CD8-positive, alpha-beta T cell (primary cell): ENCODE measurements at regions of chr14 and their contacts with region 1.

Region 1: DNA sequence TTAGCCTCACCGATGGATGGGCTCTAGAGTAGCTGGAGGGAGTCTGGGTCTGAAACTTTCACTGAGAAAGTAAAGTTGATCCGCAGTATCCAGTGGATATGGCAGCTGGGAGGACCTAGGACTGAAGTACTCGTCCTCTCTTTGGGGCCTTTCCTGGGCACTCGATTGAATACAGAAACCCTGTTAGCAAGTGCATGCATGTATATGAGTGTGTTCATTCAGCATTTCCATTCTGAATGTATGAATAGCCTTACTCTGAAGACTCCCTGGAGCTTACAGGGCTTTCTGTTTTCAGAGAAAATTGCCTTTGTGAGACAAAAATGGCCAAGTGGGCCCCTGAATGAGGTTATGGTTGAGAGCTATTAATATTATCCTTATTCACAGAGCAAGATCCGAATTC is 62.8 kb downstream of the DAD1 start:
- DNase-seq: no peak
- ATAC-seq: no peak
- H3K4me3 ChIP-seq: peak overlapping the region; percentile 47 to 61
- H3K4me3 Mint-ChIP-seq: peak overlapping the region; percentile 86
- H3K27ac ChIP-seq: peak overlapping the region; percentile 27 to 86
- H3K27ac Mint-ChIP-seq: peak overlapping the region; percentile 99
- H3K4me1 ChIP-seq: peaks cover 90% of the 10 kb centered on the region
- H3K4me1 Mint-ChIP-seq: peaks cover 89% of the 10 kb centered on the region
- H3K27me3 ChIP-seq: no peaks in the 10 kb centered on the region
- H3K27me3 Mint-ChIP-seq: no peaks in the 10 kb centered on the region
- CTCF ChIP-seq: no peak

Region 2: DNA sequence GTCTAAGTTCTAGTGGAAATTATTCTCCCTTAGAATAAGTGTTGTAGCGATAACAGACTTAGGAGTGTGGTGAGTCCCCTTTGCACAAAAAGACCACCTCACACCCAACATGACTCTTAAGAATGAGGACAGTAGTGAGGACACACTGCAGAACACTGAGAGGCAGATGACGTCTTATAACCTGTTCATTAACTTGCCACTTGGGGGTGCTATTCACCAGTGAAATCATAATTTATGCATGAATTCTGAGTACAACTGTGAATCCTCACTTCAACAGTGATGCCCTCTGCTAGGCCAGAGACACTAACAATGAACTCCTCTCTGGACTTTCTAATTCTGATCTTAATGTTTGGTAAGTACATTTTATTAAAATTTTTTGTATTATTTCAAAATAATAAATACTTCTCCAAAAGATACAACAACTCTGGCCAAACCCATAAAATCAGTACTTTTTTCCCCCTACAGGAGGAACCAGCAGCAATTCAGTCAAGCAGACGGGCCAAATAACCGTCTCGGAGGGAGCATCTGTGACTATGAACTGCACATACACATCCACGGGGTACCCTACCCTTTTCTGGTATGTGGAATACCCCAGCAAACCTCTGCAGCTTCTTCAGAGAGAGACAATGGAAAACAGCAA is 211.9 kb before region 1 on chr14:
- CTCF ChIA-PET with region 1: no interaction called
- POLR2A ChIA-PET with region 1: no interaction called
- intact Hi-C with region 1: no loop called
- DNase-seq: peak in 3 of 9 experiments; percentile 3 to 55 (median 36)
- ATAC-seq: peak; percentile 54
- H3K4me3 ChIP-seq: no peak overlapping the region
- H3K4me3 Mint-ChIP-seq: peak overlapping the region; percentile 42
- H3K27ac ChIP-seq: no peak overlapping the region
- H3K27ac Mint-ChIP-seq: peak overlapping the region; percentile 22
- H3K4me1 ChIP-seq: no peaks in the 10 kb centered on the region
- H3K4me1 Mint-ChIP-seq: no peaks in the 10 kb centered on the region
- H3K27me3 ChIP-seq: no peaks in the 10 kb centered on the region
- H3K27me3 Mint-ChIP-seq: no peaks in the 10 kb centered on the region
- CTCF ChIP-seq: no peak

Region 3: GRCh38 chr14:22513066-22513812 is 13.0 kb before region 1 on chr14:
- CTCF ChIA-PET with region 1: interaction called, 47 read pairs
- POLR2A ChIA-PET with region 1: interaction called, 274 read pairs
- intact Hi-C with region 1: loop called in 1 of 2 experiments (anchors 1 kb)
- DNase-seq: no peak
- ATAC-seq: no peak
- H3K4me3 ChIP-seq: peak overlapping the region; percentile 41 to 53
- H3K4me3 Mint-ChIP-seq: peak overlapping the region; percentile 81
- H3K27ac ChIP-seq: peak overlapping the region; percentile 43 to 82
- H3K27ac Mint-ChIP-seq: peak overlapping the region; percentile 99
- H3K4me1 ChIP-seq: peaks cover 95% of the 10 kb centered on the region
- H3K4me1 Mint-ChIP-seq: peaks cover 89% of the 10 kb centered on the region
- H3K27me3 ChIP-seq: no peaks in the 10 kb centered on the region
- H3K27me3 Mint-ChIP-seq: no peaks in the 10 kb centered on the region
- CTCF ChIP-seq: no peak

Region 4: DNA sequence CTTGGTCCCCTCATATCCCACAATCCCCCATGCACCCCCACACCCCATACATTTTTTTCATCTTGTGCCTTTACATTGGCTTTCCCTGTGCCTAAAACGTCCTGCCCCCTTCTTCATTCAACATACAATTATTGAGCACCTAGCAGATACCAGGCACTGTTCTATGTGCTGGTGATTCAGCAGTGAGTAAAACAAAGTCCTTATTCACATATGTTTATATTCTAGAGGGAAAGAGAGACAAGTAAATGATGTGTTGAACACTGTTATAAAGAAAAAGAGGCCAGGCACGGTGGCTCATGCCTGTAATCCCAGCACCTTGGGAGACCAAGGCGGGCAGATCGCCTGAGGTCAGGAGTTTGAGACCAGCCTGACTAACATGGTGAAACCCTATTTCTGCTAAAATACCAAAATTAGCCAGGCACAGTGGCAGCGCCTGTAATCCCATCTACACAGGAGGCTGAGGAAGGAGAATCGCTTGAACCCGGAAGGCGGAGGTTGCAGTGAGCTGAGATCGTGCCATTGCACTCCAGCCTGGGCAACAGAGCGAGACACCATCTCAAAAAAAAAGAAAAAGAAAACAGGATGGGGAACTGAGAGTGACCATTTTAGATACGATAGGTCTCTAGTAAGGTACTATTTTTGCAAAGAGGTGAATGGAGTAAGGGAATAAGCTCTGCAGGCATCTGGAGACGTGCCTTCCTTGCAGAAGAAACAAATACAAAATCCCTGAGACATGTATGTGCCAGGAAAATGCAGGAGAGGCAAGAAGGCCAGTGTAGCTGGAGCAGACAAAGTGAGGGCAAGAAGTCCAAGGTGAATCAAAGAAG is 276.9 kb after region 1 on chr14:
- CTCF ChIA-PET with region 1: no interaction called
- POLR2A ChIA-PET with region 1: no interaction called
- intact Hi-C with region 1: no loop called
- DNase-seq: no peak
- ATAC-seq: no peak
- H3K4me3 ChIP-seq: no peak overlapping the region
- H3K4me3 Mint-ChIP-seq: no peak overlapping the region
- H3K27ac ChIP-seq: no peak overlapping the region
- H3K27ac Mint-ChIP-seq: no peak overlapping the region
- H3K4me1 ChIP-seq: no peaks in the 10 kb centered on the region
- H3K4me1 Mint-ChIP-seq: no peaks in the 10 kb centered on the region
- H3K27me3 ChIP-seq: no peaks in the 10 kb centered on the region
- H3K27me3 Mint-ChIP-seq: peaks cover 34% of the 10 kb centered on the region
- CTCF ChIP-seq: no peak